ENCODE measurements at regions of chr11 and their contacts with region 1.

Region 1: DNA sequence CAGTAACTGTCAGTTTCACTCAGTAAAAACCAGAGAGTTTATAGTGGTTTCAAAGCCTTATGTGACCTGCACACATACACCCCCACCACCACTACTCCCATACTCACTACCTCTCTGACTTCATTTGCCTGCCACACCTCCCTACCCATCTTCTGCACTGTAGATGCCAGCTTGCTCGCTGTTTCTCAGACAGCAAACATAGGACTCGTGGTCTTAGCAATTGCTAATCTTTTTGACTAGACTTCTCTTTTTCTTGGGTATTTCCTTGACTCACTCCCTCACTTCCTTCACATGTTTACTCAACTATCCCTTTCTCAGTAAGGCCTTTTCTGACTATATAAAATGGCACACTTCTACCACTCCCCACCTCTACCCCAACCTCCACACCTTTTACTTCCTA is 27.8 kb downstream of the CEP295 start:
- DNase-seq: no peak
- H3K4me3 ChIP-seq: no peak overlapping the region
- H3K27ac ChIP-seq: no peak overlapping the region
- H3K4me1 ChIP-seq: no peaks in the 10 kb centered on the region
- H3K27me3 ChIP-seq: no peaks in the 10 kb centered on the region
- CTCF ChIP-seq: no peak
- POLR2A ChIP-seq: no peak

Region 2: GRCh38 chr11:93028960-93029522 is 660.2 kb before region 1 on chr11:
- intact Hi-C with region 1: loop called (anchors 5 kb)
- DNase-seq: no peak
- H3K4me3 ChIP-seq: no peak overlapping the region
- H3K27ac ChIP-seq: no peak overlapping the region
- H3K4me1 ChIP-seq: no peaks in the 10 kb centered on the region
- H3K27me3 ChIP-seq: no peaks in the 10 kb centered on the region
- CTCF ChIP-seq: no peak
- POLR2A ChIP-seq: no peak

Region 3: GRCh38 chr11:93732237-93732892 is 43.1 kb after region 1 on chr11:
- intact Hi-C with region 1: loop called (anchors 2 kb)
- DNase-seq: no peak
- H3K4me3 ChIP-seq: no peak overlapping the region
- H3K27ac ChIP-seq: no peak overlapping the region
- H3K4me1 ChIP-seq: no peaks in the 10 kb centered on the region
- H3K27me3 ChIP-seq: no peaks in the 10 kb centered on the region
- CTCF ChIP-seq: no peak
- POLR2A ChIP-seq: no peak

Measured in breast epithelium (tissue), 4 donors.